ENCODE measurements at regions of chr7 and their contacts with region 1.

Region 1: DNA sequence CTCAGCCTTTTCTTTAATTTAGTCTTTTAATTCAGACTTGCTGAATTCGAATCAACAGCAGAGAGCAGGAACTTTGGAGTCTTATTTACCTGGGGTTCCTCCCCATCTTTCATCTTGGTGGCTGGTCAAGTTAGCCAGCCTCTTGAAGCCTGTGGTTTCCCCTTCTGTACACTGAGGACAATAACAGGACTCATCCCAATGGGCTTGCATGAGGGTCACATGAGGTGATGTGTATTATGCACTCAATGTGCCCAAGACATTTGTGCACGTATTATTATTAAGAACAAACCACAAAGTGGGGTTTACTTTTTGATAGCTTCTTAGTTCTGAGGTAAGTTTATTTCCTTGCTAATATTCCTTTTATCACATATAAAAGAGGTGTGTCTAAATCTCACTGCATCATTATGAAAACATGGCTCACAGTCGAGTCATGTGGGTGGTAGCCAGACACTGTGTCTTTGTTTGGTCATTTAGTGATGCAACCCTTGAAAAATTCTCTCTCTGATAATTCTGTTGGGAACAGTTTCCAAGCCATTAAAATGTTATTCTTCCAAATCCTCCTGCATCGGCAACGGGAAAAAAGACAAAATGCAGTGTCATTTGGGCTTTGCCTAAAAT is 86.5 kb upstream of the GRB10 start:
- DNase-seq: peak; percentile 72
- H3K4me3 Mint-ChIP-seq: peak overlapping the region; percentile 51
- H3K27ac Mint-ChIP-seq: peak overlapping the region; percentile 99
- H3K4me1 Mint-ChIP-seq: peaks cover 58% of the 10 kb centered on the region
- H3K27me3 Mint-ChIP-seq: no peaks in the 10 kb centered on the region
- CTCF ChIP-seq: no peak

Region 2: GRCh38 chr7:50832744-50833143 is 36.5 kb before region 1 on chr7:
- CTCF ChIA-PET with region 1: interaction called, 3 read pairs
- intact Hi-C with region 1: loop called (anchors 2 kb)
- DNase-seq: peak; percentile 75
- H3K4me3 Mint-ChIP-seq: peak overlapping the region; percentile 36
- H3K27ac Mint-ChIP-seq: peak overlapping the region; percentile 86
- H3K4me1 Mint-ChIP-seq: peaks cover 72% of the 10 kb centered on the region
- H3K27me3 Mint-ChIP-seq: no peaks in the 10 kb centered on the region
- CTCF ChIP-seq: no peak

Region 3: DNA sequence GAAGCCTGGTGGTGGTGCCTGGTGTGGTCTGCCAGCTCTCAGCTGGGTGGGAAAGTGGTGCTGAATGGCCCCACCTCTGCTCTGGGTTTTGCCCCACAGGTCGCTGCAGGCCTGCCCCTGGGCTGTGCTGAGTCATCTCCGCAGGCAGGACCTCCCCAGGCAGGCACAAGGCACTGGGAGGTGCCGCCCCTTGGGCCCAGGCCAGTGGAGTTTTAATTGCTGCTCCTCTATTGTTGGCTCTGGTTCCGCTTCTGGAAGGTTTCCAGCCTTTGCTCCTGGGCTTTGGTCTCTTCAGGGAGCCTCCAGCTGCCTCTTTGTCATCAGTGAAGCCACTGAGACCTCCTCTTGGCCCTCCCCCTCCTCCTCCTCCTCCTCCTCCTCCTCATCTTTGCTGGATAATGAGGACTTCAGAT is 93.8 kb after region 1 on chr7:
- CTCF ChIA-PET with region 1: no interaction called
- intact Hi-C with region 1: loop called (anchors 10 kb)
- DNase-seq: peak; percentile 92
- H3K4me3 Mint-ChIP-seq: no peak overlapping the region
- H3K27ac Mint-ChIP-seq: no peak overlapping the region
- H3K4me1 Mint-ChIP-seq: peaks cover 42% of the 10 kb centered on the region
- H3K27me3 Mint-ChIP-seq: no peaks in the 10 kb centered on the region
- CTCF ChIP-seq: no peak

Region 4: GRCh38 chr7:51045319-51046102 is 176.3 kb after region 1 on chr7:
- CTCF ChIA-PET with region 1: no interaction called
- intact Hi-C with region 1: loop called (anchors 5 kb)
- DNase-seq: peak; percentile 82
- H3K4me3 Mint-ChIP-seq: peak overlapping the region; percentile 43
- H3K27ac Mint-ChIP-seq: peak overlapping the region; percentile 48
- H3K4me1 Mint-ChIP-seq: peaks cover 36% of the 10 kb centered on the region
- H3K27me3 Mint-ChIP-seq: no peaks in the 10 kb centered on the region
- CTCF ChIP-seq: no peak

Region 5: GRCh38 chr7:51080622-51081269 is 211.5 kb after region 1 on chr7:
- CTCF ChIA-PET with region 1: no interaction called
- intact Hi-C with region 1: no loop called
- DNase-seq: no peak
- H3K4me3 Mint-ChIP-seq: no peak overlapping the region
- H3K27ac Mint-ChIP-seq: no peak overlapping the region
- H3K4me1 Mint-ChIP-seq: no peaks in the 10 kb centered on the region
- H3K27me3 Mint-ChIP-seq: no peaks in the 10 kb centered on the region
- CTCF ChIP-seq: no peak